T-cell (primary cell): ENCODE measurements at regions of chr1 and their contacts with region 1.

Region 1: GRCh38 chr1:28877132-28877781 is 37.1 kb upstream of the EPB41 start:
- DNase-seq: peak; percentile 29 to 89 (median 69)
- ATAC-seq: peak; percentile 77 to 83 (median 80)
- H3K4me3 ChIP-seq: no peak overlapping the region
- H3K4me3 Mint-ChIP-seq: no peak overlapping the region
- H3K27ac ChIP-seq: no peak overlapping the region
- H3K27ac Mint-ChIP-seq: no peak overlapping the region
- H3K4me1 ChIP-seq: peaks cover 2 to 11% of the 10 kb centered on the region in 2 experiments
- H3K4me1 Mint-ChIP-seq: peaks cover 6 to 8% (median 8%) of the 10 kb centered on the region in 3 donors
- H3K27me3 ChIP-seq: peaks cover 0 to 16% of the 10 kb centered on the region in 2 experiments
- H3K27me3 Mint-ChIP-seq: peaks cover 4 to 9% of the 10 kb centered on the region in 2 donors

Region 2: GRCh38 chr1:28045777-28046176 is 831.5 kb before region 1 on chr1:
- CTCF ChIA-PET with region 1: no interaction called
- POLR2A ChIA-PET with region 1: no interaction called
- DNase-seq: no peak
- ATAC-seq: no peak
- H3K4me3 ChIP-seq: no peak overlapping the region
- H3K4me3 Mint-ChIP-seq: no peak overlapping the region
- H3K27ac ChIP-seq: no peak overlapping the region
- H3K27ac Mint-ChIP-seq: no peak overlapping the region
- H3K4me1 ChIP-seq: no peaks in the 10 kb centered on the region
- H3K4me1 Mint-ChIP-seq: peaks cover 4 to 7% (median 4%) of the 10 kb centered on the region in 3 donors
- H3K27me3 ChIP-seq: no peaks in the 10 kb centered on the region
- H3K27me3 Mint-ChIP-seq: no peaks in the 10 kb centered on the region

Region 3: DNA sequence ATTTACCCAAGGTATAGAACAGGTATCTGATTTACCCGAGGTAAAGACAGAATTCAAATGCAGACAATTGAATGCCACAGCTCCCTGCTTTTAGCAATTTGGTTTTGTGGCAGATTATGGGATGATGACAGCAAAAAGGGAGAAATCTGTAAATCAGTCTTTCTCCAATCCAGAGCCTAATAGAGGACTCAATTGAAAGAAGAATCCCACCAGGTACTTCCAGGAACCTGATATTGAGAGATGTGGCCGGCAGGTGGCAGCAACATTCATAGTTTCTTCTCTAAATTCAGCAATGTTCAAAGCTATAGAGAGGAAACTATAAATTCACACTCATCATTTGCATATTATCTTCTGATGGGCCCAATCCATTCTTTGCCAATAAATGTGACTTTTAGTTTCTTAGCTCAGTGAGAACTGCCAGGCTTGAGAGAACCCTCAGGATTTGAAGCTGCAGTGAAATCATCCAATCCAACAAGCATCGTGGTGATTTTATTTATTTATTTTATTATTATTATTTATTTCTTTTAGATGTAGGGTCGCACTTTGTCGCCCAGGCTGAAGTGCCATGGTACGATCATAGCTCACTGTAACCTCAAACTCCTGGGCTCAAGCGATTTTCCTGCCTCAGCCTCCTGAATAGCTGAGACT is 517.5 kb before region 1 on chr1:
- CTCF ChIA-PET with region 1: interaction called, 7 to 23 read pairs
- POLR2A ChIA-PET with region 1: no interaction called
- DNase-seq: peak; percentile 28 to 82 (median 68)
- ATAC-seq: peak; percentile 42 to 79 (median 72)
- H3K4me3 ChIP-seq: no peak overlapping the region
- H3K4me3 Mint-ChIP-seq: no peak overlapping the region
- H3K27ac ChIP-seq: no peak overlapping the region
- H3K27ac Mint-ChIP-seq: no peak overlapping the region
- H3K4me1 ChIP-seq: no peaks in the 10 kb centered on the region
- H3K4me1 Mint-ChIP-seq: no peaks in the 10 kb centered on the region
- H3K27me3 ChIP-seq: no peaks in the 10 kb centered on the region
- H3K27me3 Mint-ChIP-seq: no peaks in the 10 kb centered on the region

Region 4: GRCh38 chr1:28409090-28409489 is 468.2 kb before region 1 on chr1:
- CTCF ChIA-PET with region 1: interaction called, 6 to 15 read pairs
- POLR2A ChIA-PET with region 1: no interaction called
- DNase-seq: no peak
- ATAC-seq: no peak
- H3K4me3 ChIP-seq: no peak overlapping the region
- H3K4me3 Mint-ChIP-seq: no peak overlapping the region
- H3K27ac ChIP-seq: no peak overlapping the region
- H3K27ac Mint-ChIP-seq: no peak overlapping the region
- H3K4me1 ChIP-seq: peaks cover 0 to 3% of the 10 kb centered on the region in 2 experiments
- H3K4me1 Mint-ChIP-seq: peaks cover 9 to 12% (median 12%) of the 10 kb centered on the region in 3 donors
- H3K27me3 ChIP-seq: no peaks in the 10 kb centered on the region
- H3K27me3 Mint-ChIP-seq: no peaks in the 10 kb centered on the region

Region 5: DNA sequence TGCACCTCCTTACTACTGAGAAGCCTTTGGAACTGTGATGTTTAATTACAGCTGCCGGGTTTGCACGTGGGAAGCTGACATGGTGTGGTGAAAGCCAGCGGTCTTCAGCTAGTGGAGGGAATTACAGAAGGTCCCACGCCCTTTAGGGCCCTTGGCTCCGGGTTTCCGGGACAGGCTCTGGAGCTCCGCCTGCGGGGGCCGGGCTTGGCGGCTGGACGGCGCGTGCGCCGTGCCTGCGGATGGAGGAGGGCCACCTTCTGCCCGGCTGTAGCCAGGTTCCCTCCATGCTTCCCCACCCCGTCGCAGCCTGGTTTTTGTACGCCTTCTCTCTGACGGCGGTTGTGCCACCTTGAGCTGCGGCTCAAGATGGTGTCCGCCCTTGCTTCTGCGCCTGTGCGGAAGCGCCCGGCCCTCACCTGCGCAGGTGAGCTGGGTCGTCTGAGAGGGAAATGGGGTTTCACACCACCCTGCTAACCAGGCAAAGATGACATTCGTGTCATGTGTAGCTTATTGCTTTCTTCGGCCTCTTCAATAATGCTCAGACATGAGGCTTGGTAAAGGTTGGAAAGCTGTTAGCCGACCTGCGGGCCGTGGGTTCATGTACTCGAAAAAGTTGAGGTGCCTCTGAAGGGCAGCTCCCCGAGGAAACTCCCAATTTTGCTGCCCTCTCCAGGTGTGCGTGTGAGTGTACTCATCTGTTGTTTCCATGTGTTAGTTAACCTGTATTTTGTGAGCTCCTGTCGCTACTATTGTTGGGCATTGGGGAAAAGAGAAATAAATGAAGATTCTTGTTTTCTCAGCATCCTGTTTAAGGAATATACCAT is 101.9 kb before region 1 on chr1:
- CTCF ChIA-PET with region 1: interaction called in 1 of 2 experiments, 13 read pairs
- POLR2A ChIA-PET with region 1: no interaction called
- DNase-seq: peak; percentile 47 to 80 (median 67)
- ATAC-seq: peak; percentile 91 to 95 (median 94)
- H3K4me3 ChIP-seq: peak overlapping the region; percentile 64 to 76
- H3K4me3 Mint-ChIP-seq: peak overlapping the region; percentile 75 to 85 (median 78)
- H3K27ac ChIP-seq: peak overlapping the region; percentile 64
- H3K27ac Mint-ChIP-seq: peak overlapping the region; percentile 76 to 81
- H3K4me1 ChIP-seq: peaks cover 2 to 16% of the 10 kb centered on the region in 2 experiments
- H3K4me1 Mint-ChIP-seq: peaks cover 5 to 10% (median 9%) of the 10 kb centered on the region in 3 donors
- H3K27me3 ChIP-seq: no peaks in the 10 kb centered on the region
- H3K27me3 Mint-ChIP-seq: no peaks in the 10 kb centered on the region

Region 6: GRCh38 chr1:28811766-28812668 is 65.2 kb before region 1 on chr1 and contains the start of gene OPRD1:
- CTCF ChIA-PET with region 1: no interaction called
- POLR2A ChIA-PET with region 1: no interaction called
- DNase-seq: no peak
- ATAC-seq: no peak
- H3K4me3 ChIP-seq: no peak within 1 kb of the TSS
- H3K4me3 Mint-ChIP-seq: no peak within 1 kb of the TSS
- H3K27ac ChIP-seq: no peak within 1 kb of the TSS
- H3K27ac Mint-ChIP-seq: no peak within 1 kb of the TSS
- H3K4me1 ChIP-seq: peaks cover 0 to 3% of the 10 kb centered on the region in 2 experiments
- H3K4me1 Mint-ChIP-seq: peaks cover 0 to 10% (median 6%) of the 10 kb centered on the region in 3 donors
- H3K27me3 ChIP-seq: peaks cover 13 to 69% of the 10 kb centered on the region in 2 experiments
- H3K27me3 Mint-ChIP-seq: peaks cover 50 to 59% of the 10 kb centered on the region in 2 donors
- total RNA-seq, gene OPRD1: not detected

Region 7: DNA sequence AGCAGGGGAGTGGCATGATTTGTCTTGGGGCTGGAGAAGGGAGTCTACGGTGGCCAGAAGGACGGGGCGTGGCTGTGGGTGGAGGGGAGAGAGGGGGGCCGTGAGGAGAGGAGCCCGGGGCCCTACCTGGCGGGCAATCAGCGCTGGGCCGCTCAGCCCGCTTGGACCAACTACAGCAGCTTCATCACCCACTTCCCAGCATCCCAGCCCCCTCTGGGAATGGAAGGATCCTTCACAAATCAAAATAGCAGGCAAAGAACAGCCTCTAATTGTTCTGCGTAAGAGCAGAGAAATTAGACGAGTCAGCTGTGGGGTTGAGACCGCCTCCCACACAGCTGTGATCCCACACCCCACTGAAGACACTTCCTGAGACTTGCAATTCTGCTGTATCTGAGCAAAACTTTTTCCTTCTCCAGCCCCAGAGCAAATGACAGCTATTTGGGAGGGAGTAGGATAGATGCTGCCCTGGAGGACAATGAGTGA is 21.7 kb before region 1 on chr1:
- CTCF ChIA-PET with region 1: no interaction called
- POLR2A ChIA-PET with region 1: no interaction called
- DNase-seq: no peak
- ATAC-seq: no peak
- H3K4me3 ChIP-seq: no peak overlapping the region
- H3K4me3 Mint-ChIP-seq: no peak overlapping the region
- H3K27ac ChIP-seq: no peak overlapping the region
- H3K27ac Mint-ChIP-seq: peak overlapping the region in 1 of 2 donors; percentile 13
- H3K4me1 ChIP-seq: no peaks in the 10 kb centered on the region
- H3K4me1 Mint-ChIP-seq: peaks cover 0 to 6% (median 0%) of the 10 kb centered on the region in 3 donors
- H3K27me3 ChIP-seq: peaks cover 0 to 13% of the 10 kb centered on the region in 2 experiments
- H3K27me3 Mint-ChIP-seq: peaks cover 4 to 19% of the 10 kb centered on the region in 2 donors

Region 8: DNA sequence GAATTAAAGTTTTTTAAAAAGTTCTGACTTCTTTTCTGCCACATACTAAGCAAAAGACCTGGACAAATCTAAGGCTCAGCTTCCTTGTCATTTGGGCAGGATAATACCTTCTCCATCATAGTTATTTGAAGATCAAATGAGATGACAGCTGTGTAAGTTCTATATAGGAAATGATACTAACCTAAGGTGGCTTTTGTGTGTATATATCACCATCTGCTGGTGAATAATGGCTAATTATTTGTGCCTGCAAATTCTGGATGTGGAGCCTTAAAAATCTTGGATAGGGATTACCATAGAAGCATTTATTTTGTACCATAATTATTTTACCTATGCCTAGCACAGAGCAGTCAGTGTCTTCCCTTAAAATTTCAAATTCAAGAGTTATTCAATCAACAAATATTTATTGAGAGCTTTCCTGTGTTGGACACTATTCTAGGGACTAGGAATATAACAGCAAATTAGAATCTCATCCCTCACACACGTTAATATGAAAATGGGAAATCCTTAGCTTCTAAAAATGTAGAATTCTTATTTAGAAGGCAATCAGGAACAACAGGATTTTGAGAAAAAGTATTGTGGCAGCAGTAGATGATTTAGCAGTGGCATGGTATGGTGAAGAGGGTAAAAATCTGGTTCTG is 156.7 kb after region 1 on chr1:
- CTCF ChIA-PET with region 1: interaction called, 17 to 92 read pairs
- POLR2A ChIA-PET with region 1: interaction called in 1 of 2 experiments, 5 read pairs
- DNase-seq: peak in 2 of 35 experiments; percentile 10 to 63
- ATAC-seq: peak in 3 of 4 experiments; percentile 41 to 57 (median 44)
- H3K4me3 ChIP-seq: no peak overlapping the region
- H3K4me3 Mint-ChIP-seq: no peak overlapping the region
- H3K27ac ChIP-seq: no peak overlapping the region
- H3K27ac Mint-ChIP-seq: no peak overlapping the region
- H3K4me1 ChIP-seq: no peaks in the 10 kb centered on the region
- H3K4me1 Mint-ChIP-seq: peaks cover 0 to 4% (median 0%) of the 10 kb centered on the region in 3 donors
- H3K27me3 ChIP-seq: no peaks in the 10 kb centered on the region
- H3K27me3 Mint-ChIP-seq: no peaks in the 10 kb centered on the region